ENCODE measurements at regions of chr6 and their contacts with region 1.

Region 1: DNA sequence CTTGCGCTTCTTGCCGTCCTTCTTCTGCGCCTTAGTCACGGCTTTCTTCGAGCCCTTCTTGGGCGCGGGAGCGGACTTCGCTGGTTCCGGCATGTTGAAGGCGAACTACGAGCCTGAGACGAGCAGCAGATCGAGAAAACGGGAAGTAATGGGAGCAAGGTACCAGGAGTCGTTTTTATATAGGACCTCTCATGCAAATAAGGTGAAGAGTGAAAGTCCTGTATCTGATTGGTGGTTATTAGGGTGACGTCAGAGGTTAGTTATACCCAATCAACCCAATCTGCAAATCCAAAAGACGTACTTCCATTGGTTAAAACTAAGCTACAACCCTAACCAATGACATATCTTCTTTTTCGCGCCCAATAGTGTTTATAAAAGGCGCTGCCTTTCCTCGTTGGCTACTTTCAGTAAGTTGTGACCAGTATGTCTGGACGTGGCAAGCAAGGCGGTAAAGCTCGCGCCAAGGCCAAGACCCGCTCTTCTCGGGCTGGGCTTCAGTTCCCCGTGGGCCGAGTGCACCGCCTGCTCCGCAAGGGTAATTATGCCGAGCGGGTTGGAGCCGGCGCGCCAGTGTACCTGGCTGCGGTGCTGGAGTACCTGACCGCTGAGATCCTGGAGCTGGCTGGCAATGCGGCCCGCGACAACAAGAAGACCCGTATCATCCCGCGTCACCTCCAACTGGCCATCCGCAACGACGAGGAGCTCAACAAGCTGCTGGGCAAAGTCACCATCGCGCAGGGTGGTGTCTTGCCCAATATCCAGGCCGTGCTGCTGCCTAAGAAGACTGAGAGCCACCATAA is 100.6 kb upstream of the PRSS16 start:
- DNase-seq: peak; percentile 87
- H3K4me3 Mint-ChIP-seq: no peak overlapping the region
- H3K27ac Mint-ChIP-seq: no peak overlapping the region
- H3K4me1 Mint-ChIP-seq: peaks cover 31% of the 10 kb centered on the region
- H3K27me3 Mint-ChIP-seq: no peaks in the 10 kb centered on the region

Region 2: DNA sequence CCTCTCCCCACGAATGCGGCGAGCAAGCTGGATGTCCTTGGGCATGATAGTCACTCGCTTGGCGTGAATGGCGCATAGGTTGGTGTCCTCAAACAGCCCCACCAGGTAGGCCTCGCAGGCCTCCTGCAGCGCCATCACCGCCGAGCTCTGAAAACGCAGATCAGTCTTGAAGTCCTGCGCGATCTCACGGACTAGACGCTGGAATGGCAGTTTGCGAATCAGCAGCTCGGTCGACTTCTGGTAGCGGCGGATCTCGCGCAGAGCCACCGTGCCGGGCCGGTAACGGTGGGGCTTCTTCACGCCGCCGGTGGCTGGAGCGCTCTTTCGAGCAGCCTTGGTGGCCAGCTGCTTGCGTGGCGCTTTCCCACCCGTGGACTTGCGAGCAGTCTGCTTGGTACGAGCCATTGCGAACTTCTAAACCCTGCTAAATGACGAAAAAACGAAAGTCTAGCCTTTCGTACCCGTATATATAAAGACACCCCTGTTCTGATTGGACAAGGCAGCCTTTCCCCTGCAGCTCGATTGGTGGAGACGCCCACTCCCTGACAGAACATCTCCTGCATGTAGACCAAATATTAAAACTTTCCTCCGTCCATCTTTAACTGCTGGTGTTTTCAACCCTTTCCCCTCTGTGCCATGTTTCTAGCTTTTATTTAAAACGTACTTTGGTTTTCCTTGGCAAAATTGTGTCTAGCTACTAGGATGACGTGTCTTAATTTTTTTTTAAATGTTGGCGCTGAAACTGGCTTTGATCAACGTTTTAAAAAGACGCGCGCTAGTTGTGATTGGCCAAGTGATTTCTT is 949.9 kb before region 1 on chr6:
- CTCF ChIA-PET with region 1: no interaction called
- POLR2A ChIA-PET with region 1: interaction called, 65 read pairs
- DNase-seq: peak; percentile 85
- H3K4me3 Mint-ChIP-seq: peak overlapping the region; percentile 93
- H3K27ac Mint-ChIP-seq: peak overlapping the region; percentile 96
- H3K4me1 Mint-ChIP-seq: peaks cover 49% of the 10 kb centered on the region
- H3K27me3 Mint-ChIP-seq: no peaks in the 10 kb centered on the region

Region 3: GRCh38 chr6:27126815-27127537 is 19.9 kb before region 1 on chr6:
- CTCF ChIA-PET with region 1: interaction called, 66 read pairs
- POLR2A ChIA-PET with region 1: interaction called, 971 read pairs
- DNase-seq: peak; percentile 87
- H3K4me3 Mint-ChIP-seq: peak overlapping the region; percentile 67
- H3K27ac Mint-ChIP-seq: peak overlapping the region; percentile 84
- H3K4me1 Mint-ChIP-seq: peaks cover 51% of the 10 kb centered on the region
- H3K27me3 Mint-ChIP-seq: no peaks in the 10 kb centered on the region

Region 4: GRCh38 chr6:27177485-27178406 is 30.8 kb after region 1 on chr6:
- CTCF ChIA-PET with region 1: interaction called, 4 read pairs
- POLR2A ChIA-PET with region 1: interaction called, 23 read pairs
- DNase-seq: peak; percentile 80
- H3K4me3 Mint-ChIP-seq: peak overlapping the region; percentile 92
- H3K27ac Mint-ChIP-seq: peak overlapping the region; percentile 88
- H3K4me1 Mint-ChIP-seq: peaks cover 20% of the 10 kb centered on the region
- H3K27me3 Mint-ChIP-seq: peaks cover 21% of the 10 kb centered on the region

Region 5: GRCh38 chr6:27275025-27275956 is 128.4 kb after region 1 on chr6:
- CTCF ChIA-PET with region 1: no interaction called
- POLR2A ChIA-PET with region 1: no interaction called
- DNase-seq: no peak
- H3K4me3 Mint-ChIP-seq: no peak overlapping the region
- H3K27ac Mint-ChIP-seq: no peak overlapping the region
- H3K4me1 Mint-ChIP-seq: peaks cover 8% of the 10 kb centered on the region
- H3K27me3 Mint-ChIP-seq: peaks cover 58% of the 10 kb centered on the region

Region 6: DNA sequence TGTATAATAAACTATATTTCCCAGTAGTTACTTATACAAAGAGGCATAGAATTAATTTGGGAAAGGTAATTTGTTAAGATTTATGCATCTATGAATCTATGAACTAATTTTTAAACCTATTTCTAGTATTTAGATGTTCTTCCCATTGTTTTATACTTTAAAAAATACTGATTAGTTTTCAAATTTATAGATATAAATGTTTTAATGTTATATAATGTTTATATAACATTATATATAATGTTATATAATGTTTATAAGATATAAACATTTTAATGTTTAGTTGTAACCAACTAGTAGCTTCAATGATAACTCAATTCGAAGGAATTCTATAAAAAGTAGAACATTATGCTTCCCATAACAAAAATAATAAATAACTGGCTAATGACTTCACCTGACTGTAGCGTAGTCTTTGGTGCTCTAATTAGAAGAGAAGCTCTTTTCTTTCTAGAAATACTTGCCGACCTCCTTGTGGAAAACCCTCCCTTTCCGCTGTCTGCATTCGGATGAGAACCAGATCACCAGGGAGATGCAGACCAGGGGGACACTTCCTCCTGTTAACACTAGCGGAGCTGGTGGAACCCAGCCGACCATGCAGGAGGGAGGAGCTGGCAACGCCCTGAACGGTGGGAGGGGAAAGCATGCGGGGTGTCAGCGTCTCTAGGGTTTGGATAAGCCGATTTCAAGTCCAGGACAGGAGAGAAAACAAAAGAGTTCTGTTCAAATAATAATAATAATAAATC is 606.9 kb after region 1 on chr6:
- CTCF ChIA-PET with region 1: interaction called, 12 read pairs
- POLR2A ChIA-PET with region 1: interaction called, 9 read pairs
- DNase-seq: peak; percentile 80
- H3K4me3 Mint-ChIP-seq: peak overlapping the region; percentile 73
- H3K27ac Mint-ChIP-seq: peak overlapping the region; percentile 100
- H3K4me1 Mint-ChIP-seq: peaks cover 48% of the 10 kb centered on the region
- H3K27me3 Mint-ChIP-seq: peaks cover 5% of the 10 kb centered on the region

Region 7: GRCh38 chr6:27871924-27872638 is 725.2 kb after region 1 on chr6:
- CTCF ChIA-PET with region 1: interaction called, 5 read pairs
- POLR2A ChIA-PET with region 1: interaction called, 157 read pairs
- DNase-seq: peak; percentile 87
- H3K4me3 Mint-ChIP-seq: peak overlapping the region; percentile 81
- H3K27ac Mint-ChIP-seq: peak overlapping the region; percentile 99
- H3K4me1 Mint-ChIP-seq: peaks cover 60% of the 10 kb centered on the region
- H3K27me3 Mint-ChIP-seq: no peaks in the 10 kb centered on the region

Measured in activated CD4-positive, alpha-beta memory T cell treated with anti-CD3 and anti-CD28 coated beads, Interleukin-2, amount 10 ng/mL, durations not matched to agents 7 days and 5 days (primary cell).